ENCODE measurements at regions of chr15 and their contacts with region 1.

Region 1: DNA sequence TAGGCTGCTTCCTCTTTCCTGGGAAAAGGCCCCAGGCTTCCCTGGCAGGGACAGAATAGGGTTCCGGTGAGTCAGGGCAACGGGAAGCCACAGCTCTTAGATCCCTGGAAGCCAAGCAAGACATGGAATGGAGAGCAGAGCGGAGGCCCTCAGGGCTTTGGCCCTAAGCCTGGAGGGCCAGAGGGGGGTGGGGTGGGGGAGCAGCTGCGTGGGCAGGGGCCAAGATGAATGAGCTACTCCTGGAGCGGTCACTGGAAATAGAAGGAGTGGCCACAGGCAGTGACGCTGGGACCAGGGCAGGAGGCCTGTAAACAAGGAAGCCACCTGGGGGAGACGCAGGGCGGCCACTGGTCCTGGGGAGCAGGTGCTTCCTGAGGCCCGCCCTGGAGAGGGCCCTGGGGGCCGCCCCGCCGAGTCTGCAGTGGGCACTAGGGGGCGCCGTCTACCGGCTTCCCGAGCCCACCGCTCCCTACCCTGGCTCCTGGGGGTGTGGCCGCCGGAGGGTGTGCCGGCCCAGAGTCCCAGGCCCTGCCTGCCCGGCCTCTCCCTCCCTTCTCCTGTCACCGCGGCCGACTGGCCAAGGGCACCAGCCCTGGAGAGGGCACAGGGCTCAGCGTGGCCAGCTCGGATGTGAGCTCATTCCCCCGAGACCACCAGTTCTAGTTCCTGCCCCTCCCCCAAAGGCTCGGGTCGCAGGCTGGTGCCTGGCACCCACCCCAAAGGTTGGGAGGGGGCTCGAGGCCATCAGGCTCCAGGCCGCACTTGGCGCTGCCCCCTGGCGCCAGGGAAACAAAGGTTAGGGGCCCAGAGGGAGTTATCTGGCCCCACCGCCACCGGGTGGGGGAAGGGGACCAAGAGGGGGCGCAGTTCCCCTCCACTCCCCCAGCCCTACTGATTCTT is 12.1 kb downstream of the VPS18 start:
- DNase-seq: peak in 1 of 2 donors; percentile 96
- H3K4me3 ChIP-seq: peak overlapping the region; percentile 51 to 61
- H3K27ac ChIP-seq: peak overlapping the region; percentile 90
- H3K4me1 ChIP-seq: peaks cover 47% of the 10 kb centered on the region
- H3K27me3 ChIP-seq: no peaks in the 10 kb centered on the region
- CTCF ChIP-seq: peak; percentile 70 to 87 (median 83)
- POLR2A ChIP-seq: no peak

Region 2: DNA sequence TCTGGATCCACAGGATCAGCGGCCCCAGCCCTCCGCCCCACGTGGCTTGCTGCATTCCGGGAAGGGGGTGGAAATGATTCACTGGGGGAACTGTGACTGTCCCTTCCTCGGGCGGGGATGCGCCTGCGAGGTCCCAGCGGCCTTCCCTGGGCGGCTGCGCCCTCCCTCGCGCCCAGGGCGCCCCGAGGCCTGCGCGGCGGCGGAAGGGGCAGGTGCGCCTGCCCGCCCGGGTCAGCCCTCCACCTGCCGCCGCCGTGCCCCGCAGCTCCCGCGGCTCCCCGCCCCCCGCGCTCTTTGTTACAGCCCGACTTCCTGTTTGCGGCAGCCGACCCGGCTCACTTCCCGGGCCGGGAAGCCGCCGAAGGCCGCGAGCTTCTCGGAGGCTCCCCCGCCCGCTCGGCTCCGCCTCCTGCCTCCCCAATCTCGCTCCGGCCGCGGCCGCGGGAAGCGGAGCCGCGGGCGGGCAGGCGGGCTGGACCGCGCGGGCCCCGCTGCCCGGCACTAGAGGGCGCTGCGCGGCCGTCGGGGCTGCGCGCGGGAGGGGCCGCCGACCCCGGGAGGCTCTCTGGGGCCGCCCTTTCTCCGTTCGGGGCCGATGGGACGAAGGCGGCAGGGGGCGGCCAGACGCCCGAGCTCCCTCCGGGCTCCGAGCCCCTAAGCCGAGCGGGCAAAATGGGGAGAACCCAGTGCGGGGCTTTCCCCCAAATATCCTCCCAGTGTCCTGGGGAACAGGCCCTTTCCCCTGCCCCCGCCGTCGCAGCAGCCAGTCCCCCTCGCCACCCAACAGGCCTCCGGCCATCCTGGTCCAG is 35.4 kb after region 1 on chr15:
- intact Hi-C with region 1: loop called (anchors 5 kb)
- DNase-seq: no peak
- H3K4me3 ChIP-seq: peak overlapping the region; percentile 46 to 74
- H3K27ac ChIP-seq: peak overlapping the region; percentile 79
- H3K4me1 ChIP-seq: peaks cover 27% of the 10 kb centered on the region
- H3K27me3 ChIP-seq: no peaks in the 10 kb centered on the region
- CTCF ChIP-seq: peak in 2 of 3 experiments; percentile 16 to 56
- POLR2A ChIP-seq: no peak

Region 3: GRCh38 chr15:41022487-41023090 is 116.2 kb after region 1 on chr15:
- intact Hi-C with region 1: loop called (anchors 5 kb)
- DNase-seq: no peak
- H3K4me3 ChIP-seq: no peak overlapping the region
- H3K27ac ChIP-seq: no peak overlapping the region
- H3K4me1 ChIP-seq: peaks cover 7% of the 10 kb centered on the region
- H3K27me3 ChIP-seq: no peaks in the 10 kb centered on the region
- CTCF ChIP-seq: peak; percentile 16 to 47 (median 44)
- POLR2A ChIP-seq: no peak

Region 4: DNA sequence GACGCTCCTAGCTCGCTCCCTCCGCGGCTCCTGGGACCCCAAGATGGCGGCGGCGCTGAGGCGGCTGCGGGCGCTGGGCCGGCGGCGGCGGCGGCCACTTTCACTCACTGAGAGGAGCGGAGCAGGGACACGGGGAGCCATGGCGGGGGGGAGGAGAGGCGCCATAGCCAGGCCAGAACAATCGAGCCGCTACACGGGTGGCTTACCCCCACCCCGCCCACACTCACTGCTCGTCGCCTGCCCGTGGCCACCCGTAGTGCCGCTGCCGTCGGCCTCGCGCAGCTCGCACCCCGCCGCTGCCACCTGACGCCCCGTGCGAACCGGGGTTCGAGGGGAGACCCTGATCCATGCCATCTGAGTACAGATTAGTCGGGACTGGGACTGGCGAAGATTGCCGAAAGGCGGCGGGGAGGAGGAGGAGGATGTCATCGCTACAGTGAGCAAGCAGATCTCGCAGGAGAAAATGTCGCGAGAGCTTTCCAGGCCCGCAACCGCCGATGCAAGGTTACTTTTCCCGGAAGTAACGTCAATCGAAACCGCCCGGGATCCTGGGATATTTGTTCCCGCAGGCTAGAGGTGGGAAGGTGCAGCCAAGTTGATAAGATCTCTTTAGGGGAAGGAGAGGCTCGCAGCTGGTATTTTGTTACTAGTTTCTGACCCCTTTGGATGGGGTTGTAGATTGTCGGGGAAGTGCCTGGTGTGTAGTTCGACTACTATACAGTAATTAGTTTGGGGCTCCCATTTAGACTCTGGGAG is 210.0 kb after region 1 on chr15 and contains the start of gene INO80:
- intact Hi-C with region 1: loop called (anchors 10 kb)
- DNase-seq: peak; percentile 98 to 99
- H3K4me3 ChIP-seq: peak within 1 kb of the TSS; percentile 79 to 96
- H3K27ac ChIP-seq: peak within 1 kb of the TSS; percentile 99
- H3K4me1 ChIP-seq: peaks cover 31% of the 10 kb centered on the region
- H3K27me3 ChIP-seq: no peaks in the 10 kb centered on the region
- CTCF ChIP-seq: no peak
- POLR2A ChIP-seq: no peak
- total RNA-seq, gene INO80: 31.7 TPM

Region 5: DNA sequence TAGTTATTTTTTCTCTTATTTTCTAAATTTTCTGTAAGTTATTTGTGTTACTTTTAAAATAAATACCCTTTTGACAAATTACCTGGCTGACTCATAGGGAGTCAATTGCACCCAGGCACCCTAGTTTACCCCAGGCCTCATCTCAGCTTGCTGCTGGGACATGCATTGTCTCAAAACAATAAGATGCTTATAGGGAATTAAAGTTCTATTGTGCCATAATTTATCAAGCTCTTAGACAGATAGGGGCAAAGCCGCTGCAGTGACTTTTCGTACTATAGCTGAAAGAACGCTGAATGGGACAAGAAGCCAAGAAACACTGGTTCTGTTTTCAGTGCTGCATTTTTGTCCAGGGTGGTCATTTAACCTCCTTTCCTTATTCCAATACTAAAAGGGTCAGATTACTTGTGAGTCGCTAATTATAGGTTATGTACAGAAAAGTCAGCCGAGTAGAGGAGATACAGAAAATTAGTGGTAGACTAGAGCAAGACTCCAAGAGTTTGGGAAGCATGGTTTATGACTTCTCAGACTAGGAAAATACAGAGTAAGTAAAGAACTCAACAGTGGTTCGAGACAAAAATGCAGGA is 274.0 kb after region 1 on chr15:
- intact Hi-C with region 1: loop called (anchors 2 kb)
- DNase-seq: no peak
- H3K4me3 ChIP-seq: no peak overlapping the region
- H3K27ac ChIP-seq: no peak overlapping the region
- H3K4me1 ChIP-seq: no peaks in the 10 kb centered on the region
- H3K27me3 ChIP-seq: no peaks in the 10 kb centered on the region
- CTCF ChIP-seq: no peak
- POLR2A ChIP-seq: no peak

Measured in vagina (tissue), 2 donors.